ENCODE measurements at regions of chr20 and their contacts with region 1.

Region 1: GRCh38 chr20:53939572-53940359 is 130.6 kb downstream of the BCAS1 start:
- DNase-seq: peak; percentile 80 to 95 (median 81)
- ATAC-seq: peak; percentile 87
- H3K4me3 ChIP-seq: no peak overlapping the region
- H3K27ac ChIP-seq: peak overlapping the region; percentile 33; the same call in 2 of the 3 replicates
- H3K4me1 ChIP-seq: peaks cover 0 to 56% of the 10 kb centered on the region in 2 experiments; a peak in 4 of 5 replicates
- H3K27me3 ChIP-seq: no peaks in the 10 kb centered on the region
- CTCF ChIP-seq: peak; percentile 87 to 91 (median 88)
- EP300 ChIP-seq: no peak
- POLR2A ChIP-seq: no peak
- RAD21 ChIP-seq: peak; percentile 94 to 96

Region 2: GRCh38 chr20:53208110-53208832 is 731.5 kb before region 1 on chr20:
- CTCF ChIA-PET with region 1: interaction called, 3 read pairs
- POLR2A ChIA-PET with region 1: no interaction called
- in situ Hi-C with region 1: no loop called
- intact Hi-C with region 1: loop called (anchors 10 kb)
- DNase-seq: peak; percentile 20 to 48 (median 32)
- ATAC-seq: peak; percentile 83
- H3K4me3 ChIP-seq: no peak overlapping the region
- H3K27ac ChIP-seq: no peak overlapping the region
- H3K4me1 ChIP-seq: peaks cover 0 to 2% of the 10 kb centered on the region in 2 experiments; a peak in 2 of 5 replicates
- H3K27me3 ChIP-seq: peaks cover 0 to 6% of the 10 kb centered on the region in 2 experiments; a peak in 1 of 5 replicates
- CTCF ChIP-seq: peak; percentile 62 to 68 (median 63)
- EP300 ChIP-seq: no peak
- POLR2A ChIP-seq: no peak
- RAD21 ChIP-seq: peak in 1 of 2 experiments; percentile 51; a peak in 2 of 4 replicates

Region 3: GRCh38 chr20:53578492-53579222 is 361.1 kb before region 1 on chr20:
- CTCF ChIA-PET with region 1: interaction called, 32 read pairs
- POLR2A ChIA-PET with region 1: interaction called, 3 read pairs
- in situ Hi-C with region 1: loop called (anchors 5 kb)
- intact Hi-C with region 1: loop called (anchors 1 kb)
- DNase-seq: peak; percentile 57 to 91 (median 72)
- ATAC-seq: peak; percentile 80
- H3K4me3 ChIP-seq: no peak overlapping the region
- H3K27ac ChIP-seq: peak overlapping the region; percentile 80
- H3K4me1 ChIP-seq: peaks cover 5 to 17% of the 10 kb centered on the region in 2 experiments; a peak in 4 of 5 replicates
- H3K27me3 ChIP-seq: no peaks in the 10 kb centered on the region
- CTCF ChIP-seq: peak; percentile 83 to 97 (median 97)
- EP300 ChIP-seq: peak; percentile 41
- POLR2A ChIP-seq: no peak
- RAD21 ChIP-seq: peak; percentile 88 to 94

Region 4: DNA sequence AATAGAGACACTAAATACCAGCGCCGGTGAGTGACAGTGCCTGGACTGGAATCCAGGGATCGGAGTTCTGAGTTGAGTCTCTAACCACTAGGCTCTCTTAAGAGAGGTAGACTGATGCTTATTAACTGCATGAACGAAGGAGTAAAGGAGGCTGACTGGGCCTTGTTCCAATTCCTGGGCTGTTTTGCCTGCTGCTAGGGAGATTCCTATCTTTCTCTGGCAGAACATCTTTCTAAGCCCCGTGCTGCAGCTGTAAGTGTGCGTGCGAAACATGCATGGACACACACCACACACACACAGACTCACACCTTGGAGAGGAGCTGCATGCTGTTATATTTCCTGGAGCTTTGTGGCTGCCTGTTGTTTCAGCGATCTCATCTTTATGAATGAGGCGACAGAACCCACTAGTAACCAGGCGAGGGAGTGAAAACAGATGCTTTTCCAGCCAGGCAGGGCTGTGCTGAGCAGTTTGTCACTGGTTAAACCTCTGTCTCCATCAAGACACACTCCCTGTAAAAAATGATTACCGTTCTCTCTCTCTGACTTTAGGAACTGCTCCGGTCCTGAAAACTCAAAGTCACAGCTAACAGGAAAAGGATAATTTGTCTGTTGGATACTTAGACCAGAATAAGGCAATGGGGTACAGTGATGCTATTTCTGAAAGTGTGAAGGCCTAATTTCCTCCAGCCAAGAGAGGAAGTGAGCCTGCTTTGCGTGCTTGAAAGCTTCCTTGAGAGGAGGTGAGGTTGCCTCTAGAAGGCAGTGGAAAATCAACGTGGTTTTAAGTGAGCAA is 188.7 kb before region 1 on chr20:
- CTCF ChIA-PET with region 1: no interaction called
- POLR2A ChIA-PET with region 1: no interaction called
- in situ Hi-C with region 1: no loop called
- intact Hi-C with region 1: loop called (anchors 5 kb)
- DNase-seq: peak in 2 of 4 experiments; percentile 28 to 68
- ATAC-seq: peak; percentile 61
- H3K4me3 ChIP-seq: no peak overlapping the region
- H3K27ac ChIP-seq: peak overlapping the region; percentile 92
- H3K4me1 ChIP-seq: peaks cover 16 to 39% of the 10 kb centered on the region in 2 experiments
- H3K27me3 ChIP-seq: no peaks in the 10 kb centered on the region
- CTCF ChIP-seq: no peak
- EP300 ChIP-seq: no peak
- POLR2A ChIP-seq: no peak
- RAD21 ChIP-seq: peak in 1 of 2 experiments; percentile 32; a peak in 1 of 4 replicates

Region 5: DNA sequence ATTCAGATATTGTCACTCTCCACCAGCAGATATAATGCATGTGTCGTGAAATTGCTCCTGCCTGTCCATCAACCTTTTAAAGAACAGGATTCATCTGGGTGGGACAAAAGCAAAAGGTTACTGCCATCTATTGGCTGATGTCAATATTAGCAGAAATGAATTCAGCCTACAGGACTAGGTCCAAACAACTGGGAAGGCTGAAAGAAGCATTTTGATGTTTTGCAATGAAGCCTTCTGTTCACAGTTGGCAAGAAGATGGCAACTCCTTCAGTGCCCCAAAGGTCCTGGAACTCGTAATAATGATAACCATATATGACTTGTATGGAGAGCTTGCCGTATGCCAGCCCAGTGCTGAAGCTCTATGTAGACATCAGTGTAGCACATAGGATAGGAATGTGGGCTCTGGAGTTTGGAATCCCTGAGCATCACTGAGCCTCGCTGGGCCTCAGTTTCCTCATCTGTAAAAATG is 123.1 kb after region 1 on chr20:
- CTCF ChIA-PET with region 1: no interaction called
- POLR2A ChIA-PET with region 1: interaction called, 5 read pairs
- in situ Hi-C with region 1: loop called (anchors 5 kb)
- intact Hi-C with region 1: loop called (anchors 2 kb)
- DNase-seq: peak in 2 of 4 experiments; percentile 59 to 62
- ATAC-seq: peak; percentile 76
- H3K4me3 ChIP-seq: no peak overlapping the region
- H3K27ac ChIP-seq: no peak overlapping the region
- H3K4me1 ChIP-seq: peaks cover 16 to 25% of the 10 kb centered on the region in 2 experiments; a peak in 4 of 5 replicates
- H3K27me3 ChIP-seq: no peaks in the 10 kb centered on the region
- CTCF ChIP-seq: peak; percentile 60 to 85 (median 75)
- EP300 ChIP-seq: no peak
- POLR2A ChIP-seq: no peak
- RAD21 ChIP-seq: peak; percentile 82 to 85

Region 6: DNA sequence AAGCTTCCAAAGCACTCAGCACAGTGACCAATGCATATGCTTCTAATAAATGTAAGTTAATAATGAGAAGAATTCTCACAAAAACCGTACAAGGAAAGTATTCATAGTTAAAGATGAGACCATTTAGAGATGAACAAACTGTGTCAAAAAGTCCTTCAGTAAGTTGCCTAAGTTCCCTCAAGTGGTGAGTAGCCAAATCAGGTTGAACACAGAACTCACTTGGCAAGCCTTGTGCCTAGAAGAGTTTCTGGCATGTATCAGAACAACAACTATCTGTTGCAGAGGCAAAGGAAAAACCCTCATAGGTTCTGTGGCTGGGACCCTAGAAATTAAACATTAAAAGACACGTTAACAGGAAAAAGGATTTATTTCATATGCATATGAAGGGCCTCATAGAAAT is 406.1 kb after region 1 on chr20:
- CTCF ChIA-PET with region 1: no interaction called
- POLR2A ChIA-PET with region 1: no interaction called
- in situ Hi-C with region 1: no loop called
- intact Hi-C with region 1: no loop called
- DNase-seq: no peak
- ATAC-seq: no peak
- H3K4me3 ChIP-seq: no peak overlapping the region
- H3K27ac ChIP-seq: no peak overlapping the region
- H3K4me1 ChIP-seq: no peaks in the 10 kb centered on the region
- H3K27me3 ChIP-seq: no peaks in the 10 kb centered on the region
- CTCF ChIP-seq: no peak
- EP300 ChIP-seq: no peak
- POLR2A ChIP-seq: no peak
- RAD21 ChIP-seq: no peak

Measured in K562 (cell line).